Activated CD4-positive, alpha-beta memory T cell treated with anti-CD3 and anti-CD28 coated beads for 36 hours (primary cell): ENCODE measurements at regions of chr9 and their contacts with region 1.

Region 1: DNA sequence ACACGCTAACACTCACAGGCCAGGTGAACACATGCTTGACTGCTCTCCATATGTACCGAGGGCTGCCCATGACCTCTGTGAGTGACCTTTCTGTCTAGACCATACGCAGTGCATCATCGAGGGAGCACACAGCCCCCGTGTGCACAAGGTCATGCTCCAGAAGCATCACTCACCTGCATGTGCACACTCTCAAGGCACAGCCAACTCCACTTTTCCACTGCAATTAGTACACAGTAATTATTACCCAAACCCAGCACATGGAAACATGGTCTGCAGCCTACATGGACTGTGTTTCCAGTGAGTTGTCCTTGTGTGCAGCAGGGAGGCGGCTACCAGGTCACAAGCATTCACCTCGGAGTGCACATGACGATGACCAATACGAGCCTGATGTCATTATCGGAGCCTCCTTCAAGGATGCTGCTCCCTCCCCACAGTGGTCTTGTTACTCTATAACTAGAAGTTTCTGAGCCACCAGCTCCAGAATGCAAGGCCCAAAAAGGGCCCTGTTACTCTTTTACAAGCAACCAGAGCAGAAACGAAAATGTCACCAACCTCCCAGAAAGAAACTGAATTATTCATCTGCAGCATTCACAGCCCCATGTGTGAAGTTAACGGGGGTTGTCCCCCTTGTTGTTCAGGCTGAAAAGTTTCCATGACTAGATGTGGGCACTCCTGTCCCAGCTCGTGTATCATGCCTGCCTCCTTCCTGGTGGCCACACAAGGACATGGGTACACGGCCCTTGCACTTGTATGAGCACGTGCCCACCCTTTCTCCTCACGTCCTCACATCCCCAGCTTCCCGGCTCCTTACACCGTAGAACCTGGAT is 31.2 kb downstream of the SEMA4D start:
- DNase-seq: peak; percentile 82
- H3K4me3 Mint-ChIP-seq: peak overlapping the region; percentile 55
- H3K27ac Mint-ChIP-seq: peak overlapping the region; percentile 95
- H3K4me1 Mint-ChIP-seq: peaks cover 97% of the 10 kb centered on the region
- H3K27me3 Mint-ChIP-seq: no peaks in the 10 kb centered on the region

Region 2: DNA sequence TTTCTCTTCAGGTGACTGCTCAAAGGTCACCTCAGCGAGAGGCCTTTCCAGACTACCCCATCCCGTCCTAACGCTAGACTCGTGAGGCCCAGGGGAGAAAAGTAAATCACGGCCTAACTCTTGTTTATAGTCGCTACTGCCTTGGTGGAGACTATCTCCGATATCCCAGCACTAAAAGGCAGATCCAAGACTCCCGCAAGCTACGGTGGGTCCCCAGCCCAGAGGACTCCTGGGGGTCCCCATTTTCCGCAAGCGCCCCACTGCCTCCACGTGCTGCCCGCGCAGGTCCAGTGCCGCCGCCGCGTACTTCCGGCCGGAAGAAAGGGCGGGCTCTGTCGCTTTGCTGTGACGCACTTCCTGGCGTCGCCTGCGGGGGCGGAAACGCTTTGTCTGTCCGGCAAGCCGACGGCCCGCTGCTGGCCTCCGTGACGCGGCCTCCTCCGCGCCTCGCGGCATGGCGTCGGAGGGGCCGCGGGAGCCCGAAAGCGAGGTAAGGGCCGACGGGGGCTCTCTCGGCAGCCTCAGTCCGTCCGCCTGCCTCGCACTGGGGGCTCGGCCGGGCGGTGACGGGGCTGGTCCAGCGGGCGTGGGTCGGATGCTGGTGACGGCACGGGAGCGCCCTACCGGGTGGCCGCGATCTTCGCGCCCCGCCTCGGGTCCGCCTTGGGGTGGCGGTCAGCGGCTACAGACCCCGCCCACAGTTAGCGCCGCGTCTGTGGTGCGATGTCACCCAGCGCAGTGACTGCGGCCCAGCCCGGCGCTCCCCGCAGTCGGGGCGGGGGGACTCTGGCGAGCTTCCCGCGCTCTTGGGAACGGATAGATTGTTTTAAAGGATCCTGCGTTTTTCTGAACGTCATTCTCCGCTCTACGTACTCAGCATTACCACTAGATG is 148.3 kb before region 1 on chr9 and contains the start of gene SECISBP2:
- CTCF ChIA-PET with region 1: no interaction called
- POLR2A ChIA-PET with region 1: no interaction called
- intact Hi-C with region 1: loop called (anchors 1 kb)
- DNase-seq: peak; percentile 96
- H3K4me3 Mint-ChIP-seq: peak within 1 kb of the TSS; percentile 85
- H3K27ac Mint-ChIP-seq: peak within 1 kb of the TSS; percentile 97
- H3K4me1 Mint-ChIP-seq: peaks cover 75% of the 10 kb centered on the region
- H3K27me3 Mint-ChIP-seq: no peaks in the 10 kb centered on the region
- total RNA-seq, gene SECISBP2: 34.0 to 34.7 TPM

Region 3: DNA sequence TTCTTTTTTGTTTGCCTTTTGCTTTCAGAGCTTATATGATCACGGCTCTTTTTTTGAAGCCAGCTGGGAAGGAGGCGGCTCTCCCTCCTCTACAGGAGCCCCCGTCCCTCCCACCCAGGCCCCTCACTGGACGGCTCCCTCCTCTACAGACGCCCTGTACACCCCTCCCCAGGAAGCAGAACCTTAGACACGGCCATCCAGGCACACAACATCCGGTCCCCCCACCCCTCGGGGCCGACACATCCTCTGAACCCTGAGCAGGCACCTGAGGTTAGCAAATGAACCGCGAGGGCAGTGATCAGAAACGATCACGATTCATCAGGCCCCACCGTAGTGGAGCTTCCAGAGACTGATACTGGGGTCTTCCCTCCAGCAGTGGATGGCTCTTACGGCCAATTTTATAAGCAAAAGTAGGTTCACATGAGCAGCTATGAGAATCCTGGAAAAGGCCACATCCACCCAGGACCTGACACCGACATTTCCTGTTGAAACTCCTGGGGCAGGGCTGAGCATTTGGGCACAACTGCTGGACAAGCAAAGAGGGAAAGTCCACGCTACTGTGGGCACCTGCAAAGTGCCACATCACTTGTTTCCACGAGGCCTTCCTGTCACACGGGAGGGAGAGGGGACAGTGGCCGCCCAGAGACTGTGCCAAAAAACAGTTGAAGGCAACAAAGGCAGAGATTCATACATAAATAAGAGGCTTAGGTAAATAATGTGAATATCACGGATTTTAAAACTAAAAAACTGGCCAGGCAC is 47.6 kb before region 1 on chr9:
- CTCF ChIA-PET with region 1: interaction called, 3 read pairs
- POLR2A ChIA-PET with region 1: interaction called, 11 read pairs
- intact Hi-C with region 1: loop called (anchors 1 kb)
- DNase-seq: peak; percentile 87
- H3K4me3 Mint-ChIP-seq: peak overlapping the region; percentile 58
- H3K27ac Mint-ChIP-seq: peak overlapping the region; percentile 100
- H3K4me1 Mint-ChIP-seq: peaks cover 92% of the 10 kb centered on the region
- H3K27me3 Mint-ChIP-seq: no peaks in the 10 kb centered on the region

Region 4: DNA sequence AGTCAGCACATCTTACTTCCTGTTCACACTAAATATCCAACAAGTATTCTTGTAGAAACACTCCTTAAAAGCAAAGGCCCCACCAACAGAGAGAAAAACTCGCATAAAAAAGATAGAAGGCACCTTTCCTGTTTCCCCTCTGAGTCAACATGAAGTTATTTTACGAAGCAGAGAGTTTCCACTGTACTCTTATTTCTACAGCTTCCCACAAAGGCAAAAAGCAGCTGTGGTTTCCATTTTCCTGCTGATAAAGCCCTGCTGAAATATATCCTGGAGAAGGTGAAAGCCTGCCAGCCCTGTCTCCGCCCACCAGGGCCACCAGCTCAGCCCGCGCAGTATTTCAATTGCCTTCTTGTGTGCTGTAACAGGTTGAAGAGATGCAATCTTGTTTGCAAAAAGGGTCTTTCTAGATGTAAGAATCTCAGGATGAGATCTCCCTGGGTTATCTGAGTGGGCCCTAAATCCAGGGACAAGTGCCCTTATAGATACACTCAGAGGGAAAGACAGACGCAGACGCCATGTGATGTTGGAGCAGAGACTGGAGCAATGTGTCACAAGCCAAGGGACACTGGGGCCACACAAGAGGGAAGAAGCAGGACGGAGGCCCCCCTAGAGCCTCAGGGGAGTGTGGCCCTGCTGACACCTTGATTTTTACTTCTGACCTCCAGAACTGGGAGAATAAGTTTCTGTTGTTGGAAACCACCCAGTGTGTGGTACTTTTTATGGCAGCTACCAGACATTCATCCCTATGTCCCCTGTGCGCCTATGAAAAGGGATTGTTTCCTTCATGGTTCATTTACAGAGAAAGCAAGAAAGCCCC is 11.4 kb after region 1 on chr9:
- CTCF ChIA-PET with region 1: interaction called, 9 read pairs
- POLR2A ChIA-PET with region 1: interaction called, 17 read pairs
- intact Hi-C with region 1: loop called (anchors 1 kb)
- DNase-seq: peak; percentile 78
- H3K4me3 Mint-ChIP-seq: peak overlapping the region; percentile 79
- H3K27ac Mint-ChIP-seq: peak overlapping the region; percentile 97
- H3K4me1 Mint-ChIP-seq: peaks cover 88% of the 10 kb centered on the region
- H3K27me3 Mint-ChIP-seq: no peaks in the 10 kb centered on the region

Region 5: GRCh38 chr9:89497978-89498851 is 31.6 kb after region 1 on chr9 and contains the start of gene SEMA4D:
- CTCF ChIA-PET with region 1: interaction called, 3 read pairs
- POLR2A ChIA-PET with region 1: interaction called, 3 read pairs
- intact Hi-C with region 1: loop called (anchors 2 kb)
- DNase-seq: peak; percentile 81
- H3K4me3 Mint-ChIP-seq: peak within 1 kb of the TSS; percentile 81
- H3K27ac Mint-ChIP-seq: peak within 1 kb of the TSS; percentile 90
- H3K4me1 Mint-ChIP-seq: peaks cover 73% of the 10 kb centered on the region
- H3K27me3 Mint-ChIP-seq: no peaks in the 10 kb centered on the region
- total RNA-seq, gene SEMA4D: 159 to 161 TPM

Region 6: DNA sequence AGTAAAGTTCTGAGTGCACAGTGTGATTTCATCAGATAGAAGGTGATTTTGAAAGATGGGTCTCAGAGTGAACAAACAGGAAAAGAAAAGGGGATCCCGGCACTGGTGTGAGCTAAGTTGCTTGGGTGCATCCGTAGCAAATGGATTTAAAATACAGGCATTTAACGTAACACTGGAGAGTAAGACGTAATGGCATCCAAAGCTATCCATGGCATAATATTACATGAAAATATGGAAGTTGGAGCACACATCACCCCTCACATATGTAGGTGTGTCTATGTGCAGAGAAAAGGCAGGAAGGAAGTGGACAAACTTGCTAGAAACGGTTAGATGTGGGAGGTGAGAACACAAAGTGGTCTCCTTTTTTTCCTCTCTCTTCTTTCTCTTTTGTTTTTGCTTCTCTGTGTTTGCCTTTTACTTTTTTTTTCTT is 69.5 kb after region 1 on chr9:
- CTCF ChIA-PET with region 1: interaction called, 3 read pairs
- POLR2A ChIA-PET with region 1: no interaction called
- intact Hi-C with region 1: loop called (anchors 1 kb)
- DNase-seq: no peak
- H3K4me3 Mint-ChIP-seq: peak overlapping the region; percentile 61
- H3K27ac Mint-ChIP-seq: peak overlapping the region; percentile 90
- H3K4me1 Mint-ChIP-seq: peaks cover 81% of the 10 kb centered on the region
- H3K27me3 Mint-ChIP-seq: no peaks in the 10 kb centered on the region